A673 (cell line): ENCODE measurements at regions of chr1 and their contacts with region 1.

Region 1: GRCh38 chr1:13965770-13966398 is 265.9 kb downstream of the PRDM2 start:
- DNase-seq: peak; percentile 87
- H3K4me3 ChIP-seq: no peak overlapping the region
- H3K27ac ChIP-seq: no peak overlapping the region
- H3K4me1 ChIP-seq: peaks cover 5% of the 10 kb centered on the region
- H3K27me3 ChIP-seq: no peaks in the 10 kb centered on the region
- CTCF ChIP-seq: peak; percentile 81

Region 2: GRCh38 chr1:14571819-14572767 is 606.2 kb after region 1 on chr1:
- CTCF ChIA-PET with region 1: no interaction called
- POLR2A ChIA-PET with region 1: no interaction called
- intact Hi-C with region 1: loop called (anchors 5 kb)
- DNase-seq: peak; percentile 73
- H3K4me3 ChIP-seq: no peak overlapping the region
- H3K27ac ChIP-seq: no peak overlapping the region
- H3K4me1 ChIP-seq: no peaks in the 10 kb centered on the region
- H3K27me3 ChIP-seq: no peaks in the 10 kb centered on the region
- CTCF ChIP-seq: peak; percentile 73

Region 3: DNA sequence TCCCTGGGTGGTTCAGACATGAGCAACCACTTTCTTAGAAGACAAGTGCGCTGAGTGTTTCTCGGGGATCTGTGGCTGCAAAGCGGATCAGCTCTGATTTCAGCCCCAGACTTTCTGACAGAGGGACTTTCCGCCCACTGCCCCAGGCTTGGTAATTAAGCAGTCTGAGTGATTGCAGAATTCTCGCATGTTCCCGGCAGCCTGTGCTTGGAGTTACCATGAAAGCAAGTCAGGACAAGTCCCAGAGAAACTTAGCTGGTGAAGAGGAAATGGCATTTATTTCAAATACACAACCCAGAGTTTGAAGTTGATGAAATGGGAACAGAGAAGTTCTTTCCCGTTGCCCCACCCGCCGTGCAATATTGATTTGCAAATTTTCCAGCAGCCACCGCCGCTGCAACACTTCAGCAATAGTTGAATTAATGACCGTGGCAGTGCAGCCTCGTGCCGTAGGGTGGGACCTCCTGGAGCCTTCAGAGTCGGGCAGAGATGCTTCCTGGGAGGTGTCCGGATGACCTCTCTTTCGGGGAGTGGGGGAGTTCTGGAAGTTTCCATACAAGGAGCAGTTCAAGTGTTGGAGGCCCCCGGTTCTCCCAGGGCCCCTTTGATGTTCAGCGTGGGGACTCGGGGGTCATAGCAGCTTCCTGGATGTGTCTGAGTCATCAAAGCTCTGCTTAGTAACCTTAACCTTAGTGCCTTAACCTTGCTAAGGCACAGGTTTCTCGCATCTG is 767.3 kb after region 1 on chr1:
- CTCF ChIA-PET with region 1: no interaction called
- POLR2A ChIA-PET with region 1: no interaction called
- intact Hi-C with region 1: loop called (anchors 5 kb)
- DNase-seq: peak; percentile 69
- H3K4me3 ChIP-seq: peak overlapping the region; percentile 5
- H3K27ac ChIP-seq: peak overlapping the region; percentile 72
- H3K4me1 ChIP-seq: peaks cover 20% of the 10 kb centered on the region
- H3K27me3 ChIP-seq: no peaks in the 10 kb centered on the region
- CTCF ChIP-seq: no peak

Region 4: GRCh38 chr1:15028102-15028501 is 1062.2 kb after region 1 on chr1:
- CTCF ChIA-PET with region 1: interaction called, 9 read pairs
- POLR2A ChIA-PET with region 1: no interaction called
- intact Hi-C with region 1: loop called (anchors 5 kb)
- DNase-seq: no peak
- H3K4me3 ChIP-seq: no peak overlapping the region
- H3K27ac ChIP-seq: no peak overlapping the region
- H3K4me1 ChIP-seq: no peaks in the 10 kb centered on the region
- H3K27me3 ChIP-seq: no peaks in the 10 kb centered on the region
- CTCF ChIP-seq: no peak

Region 5: GRCh38 chr1:15046487-15047165 is 1080.7 kb after region 1 on chr1:
- CTCF ChIA-PET with region 1: no interaction called
- POLR2A ChIA-PET with region 1: no interaction called
- intact Hi-C with region 1: loop called (anchors 5 kb)
- DNase-seq: peak; percentile 66
- H3K4me3 ChIP-seq: no peak overlapping the region
- H3K27ac ChIP-seq: no peak overlapping the region
- H3K4me1 ChIP-seq: no peaks in the 10 kb centered on the region
- H3K27me3 ChIP-seq: no peaks in the 10 kb centered on the region
- CTCF ChIP-seq: peak; percentile 90

Region 6: GRCh38 chr1:15100121-15100874 is 1134.4 kb after region 1 on chr1:
- CTCF ChIA-PET with region 1: no interaction called
- POLR2A ChIA-PET with region 1: no interaction called
- intact Hi-C with region 1: loop called (anchors 5 kb)
- DNase-seq: peak; percentile 49
- H3K4me3 ChIP-seq: no peak overlapping the region
- H3K27ac ChIP-seq: no peak overlapping the region
- H3K4me1 ChIP-seq: no peaks in the 10 kb centered on the region
- H3K27me3 ChIP-seq: no peaks in the 10 kb centered on the region
- CTCF ChIP-seq: peak; percentile 92